ENCODE measurements at regions of chr9 and their contacts with region 1.

Region 1: DNA sequence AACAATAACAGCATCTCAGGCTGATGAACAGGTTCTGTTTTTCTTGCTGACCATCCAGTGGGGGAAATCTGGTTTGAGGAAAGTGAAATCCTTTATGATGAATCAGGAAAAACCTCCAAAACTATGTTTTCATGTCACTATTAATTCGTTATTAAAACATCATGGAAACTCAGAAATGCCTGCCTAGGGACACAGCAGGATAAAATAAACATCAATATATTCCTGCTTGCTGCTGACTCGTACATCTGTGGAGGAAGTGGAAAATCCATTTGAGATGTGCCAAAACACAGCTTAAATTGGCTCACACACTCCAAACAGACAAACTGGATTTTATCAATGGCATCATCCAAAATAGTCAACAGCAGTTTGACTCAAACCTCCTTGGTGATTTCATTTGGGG is 53.0 kb downstream of the TEK start:
- DNase-seq: no peak
- ATAC-seq: no peak
- H3K4me3 ChIP-seq: no peak overlapping the region
- H3K27ac ChIP-seq: no peak overlapping the region
- H3K4me1 ChIP-seq: no peaks in the 10 kb centered on the region
- H3K27me3 ChIP-seq: no peaks in the 10 kb centered on the region
- CTCF ChIP-seq: no peak
- EP300 ChIP-seq: no peak
- POLR2A ChIP-seq: no peak
- RAD21 ChIP-seq: no peak

Region 2: GRCh38 chr9:26112724-26113123 is 1049.3 kb before region 1 on chr9:
- CTCF ChIA-PET with region 1: no interaction called
- POLR2A ChIA-PET with region 1: no interaction called
- RAD21 ChIA-PET with region 1: no interaction called
- SMC1A ChIA-PET with region 1: no interaction called
- in situ Hi-C with region 1: no loop called
- intact Hi-C with region 1: no loop called
- DNase-seq: no peak
- ATAC-seq: no peak
- H3K4me3 ChIP-seq: no peak overlapping the region
- H3K27ac ChIP-seq: no peak overlapping the region
- H3K4me1 ChIP-seq: no peaks in the 10 kb centered on the region
- H3K27me3 ChIP-seq: no peaks in the 10 kb centered on the region
- CTCF ChIP-seq: no peak
- EP300 ChIP-seq: no peak
- POLR2A ChIP-seq: no peak
- RAD21 ChIP-seq: no peak

Region 3: DNA sequence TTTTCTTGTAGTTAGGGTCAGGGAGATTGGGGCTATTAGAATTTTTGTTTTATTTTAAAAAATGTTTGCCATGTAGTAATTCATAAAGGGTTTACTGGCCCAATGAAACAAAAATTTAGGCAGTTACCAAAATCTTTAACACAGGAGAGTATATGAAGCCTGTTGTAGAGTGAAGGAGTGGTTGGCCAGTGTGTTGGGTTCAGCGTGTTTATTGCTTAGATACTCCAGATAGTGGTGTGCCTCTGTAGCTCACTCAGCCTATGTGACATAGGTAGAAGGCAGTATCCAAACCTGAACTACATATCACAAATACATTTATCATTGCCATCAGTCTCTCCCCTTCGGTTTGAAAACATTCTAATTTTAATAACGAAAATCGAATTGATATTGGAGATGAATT is 51.9 kb before region 1 on chr9:
- CTCF ChIA-PET with region 1: no interaction called
- POLR2A ChIA-PET with region 1: no interaction called
- RAD21 ChIA-PET with region 1: no interaction called
- SMC1A ChIA-PET with region 1: no interaction called
- in situ Hi-C with region 1: loop called (anchors 5 kb)
- intact Hi-C with region 1: no loop called
- DNase-seq: no peak
- ATAC-seq: no peak
- H3K4me3 ChIP-seq: no peak overlapping the region
- H3K27ac ChIP-seq: no peak overlapping the region
- H3K4me1 ChIP-seq: no peaks in the 10 kb centered on the region
- H3K27me3 ChIP-seq: no peaks in the 10 kb centered on the region
- CTCF ChIP-seq: no peak
- EP300 ChIP-seq: no peak
- POLR2A ChIP-seq: no peak
- RAD21 ChIP-seq: no peak